Heart left ventricle (tissue), 16 donors: ENCODE measurements at regions of chr2 and their contacts with region 1.

Region 1: GRCh38 chr2:113889471-113890252 is at the start of gene ACTR3:
- DNase-seq: peak; percentile 98 to 99 (median 99)
- ATAC-seq: peak; percentile 97 to 99 (median 98)
- H3K4me3 ChIP-seq: peak within 1 kb of the TSS; percentile 73 to 99 (median 94)
- H3K27ac ChIP-seq: peak within 1 kb of the TSS; percentile 93 to 99 (median 98)
- H3K4me1 ChIP-seq: peaks cover 0 to 77% (median 53%) of the 10 kb centered on the region in 12 donors
- H3K27me3 ChIP-seq: no peaks in the 10 kb centered on the region
- CTCF ChIP-seq: peak in 1 of 12 donors; percentile 25
- POLR2A ChIP-seq: peak; percentile 69 to 93
- total RNA-seq, gene ACTR3: 53.3 to 238 (median 132) TPM

Region 2: DNA sequence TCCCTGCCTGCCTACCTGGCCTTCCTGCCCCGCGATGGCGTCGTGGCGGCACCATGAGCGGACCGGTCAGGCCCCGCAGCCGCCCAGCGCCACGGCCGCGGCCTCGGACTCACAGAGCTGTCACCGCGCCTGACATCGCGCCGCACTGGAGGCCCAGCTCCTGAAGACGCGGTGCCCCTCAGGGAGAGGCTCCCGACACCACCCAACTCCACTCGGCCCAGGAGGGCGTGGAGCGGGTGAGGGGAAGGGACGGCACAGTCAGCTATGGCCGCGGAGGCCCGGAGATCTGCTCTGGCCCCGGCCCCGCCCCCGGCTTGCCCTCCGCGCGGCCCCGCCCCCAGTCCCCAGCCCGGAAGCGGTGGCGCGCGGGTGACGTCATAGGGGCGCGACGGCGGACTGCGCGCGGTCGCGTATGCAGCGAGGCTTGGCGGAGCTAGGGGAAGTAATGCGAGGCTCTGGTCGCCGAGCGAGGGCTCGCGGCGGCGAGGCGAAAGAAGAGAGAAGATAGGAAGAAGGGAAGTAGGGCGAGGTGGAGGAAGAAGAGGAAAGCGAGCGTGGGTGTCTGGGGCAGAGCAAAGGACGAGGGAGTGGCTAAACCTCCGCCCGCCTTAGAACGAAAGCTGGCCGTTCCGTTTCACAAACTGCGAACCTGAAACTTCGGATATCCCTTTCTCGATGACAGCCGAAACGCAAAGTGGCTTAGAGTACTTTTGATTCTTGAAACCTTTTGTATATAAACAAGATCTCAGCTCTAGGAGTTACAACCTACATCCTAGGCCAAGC is 133.1 kb before region 1 on chr2 and contains the start of gene SLC35F5:
- intact Hi-C with region 1: loop called in 9 of 10 experiments (anchors 1 to 10 kb)
- DNase-seq: peak; percentile 93 to 97 (median 95)
- ATAC-seq: peak; percentile 97 to 99 (median 98)
- H3K4me3 ChIP-seq: peak within 1 kb of the TSS; percentile 68 to 97 (median 88)
- H3K27ac ChIP-seq: peak within 1 kb of the TSS; percentile 63 to 98 (median 95)
- H3K4me1 ChIP-seq: peaks cover 0 to 38% (median 19%) of the 10 kb centered on the region in 12 donors
- H3K27me3 ChIP-seq: no peaks in the 10 kb centered on the region
- CTCF ChIP-seq: no peak
- POLR2A ChIP-seq: peak in 1 of 2 donors; percentile 84
- total RNA-seq, gene SLC35F5: 38.2 to 97.2 (median 63.9) TPM

Region 3: DNA sequence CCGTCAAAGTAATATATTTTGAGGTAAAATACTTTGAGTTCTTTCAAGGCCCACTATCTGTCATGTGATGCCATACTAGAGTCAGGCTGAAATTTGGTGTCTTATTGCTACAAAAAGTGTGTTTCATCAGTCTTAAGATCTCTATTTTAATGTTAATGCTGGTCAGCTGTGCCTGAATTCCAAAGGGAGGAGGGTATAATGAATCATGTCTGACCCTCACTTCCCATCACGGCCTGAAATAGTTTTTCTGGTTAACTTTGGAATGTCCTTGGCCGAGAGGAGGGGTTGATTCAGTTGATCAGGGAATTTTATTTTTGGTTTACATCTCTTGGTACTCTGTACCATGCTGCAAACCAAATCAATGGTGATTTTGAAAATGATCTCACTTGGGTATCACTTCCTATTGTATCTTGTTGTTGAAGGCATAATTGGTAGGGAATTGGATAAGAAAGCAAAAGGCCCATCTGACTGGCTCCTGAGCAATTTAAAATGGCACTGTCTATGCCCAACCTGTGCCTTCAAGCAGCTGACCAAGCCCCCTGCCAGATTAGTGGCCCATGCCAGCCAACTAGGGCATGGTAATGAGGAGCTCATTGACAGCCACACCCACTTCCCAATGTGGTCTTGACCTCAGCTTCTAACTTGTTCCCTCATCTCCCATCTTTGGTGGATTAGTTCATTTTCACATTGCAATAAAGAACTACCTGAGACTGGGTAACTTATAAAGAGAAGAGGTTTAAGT is 127.1 kb before region 1 on chr2:
- intact Hi-C with region 1: loop called in 7 of 10 experiments (anchors 5 to 10 kb)
- DNase-seq: no peak
- ATAC-seq: no peak
- H3K4me3 ChIP-seq: no peak overlapping the region
- H3K27ac ChIP-seq: peak overlapping the region in 1 of 12 donors; percentile 24
- H3K4me1 ChIP-seq: peaks cover 0 to 16% (median 3%) of the 10 kb centered on the region in 12 donors
- H3K27me3 ChIP-seq: no peaks in the 10 kb centered on the region
- CTCF ChIP-seq: no peak
- POLR2A ChIP-seq: no peak

Region 4: DNA sequence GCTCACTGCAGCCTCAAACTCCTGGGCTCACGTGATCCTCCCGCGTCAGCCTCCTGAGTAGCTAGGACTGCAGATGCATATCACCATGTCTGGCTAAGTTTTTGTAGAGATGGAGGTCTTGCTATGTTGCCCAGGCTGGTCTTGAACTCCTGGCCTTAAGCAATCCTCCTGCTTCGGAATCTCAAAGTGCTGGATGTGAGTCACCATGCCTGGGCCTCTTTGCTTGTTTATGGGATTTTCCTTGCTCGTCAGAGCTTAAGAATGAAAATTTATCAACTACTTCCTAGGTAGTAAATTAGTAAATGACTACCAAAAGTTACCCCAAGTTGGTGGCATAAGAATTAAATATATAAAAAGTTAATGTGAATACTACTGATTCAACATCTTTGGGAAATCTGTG is 51.2 kb after region 1 on chr2:
- intact Hi-C with region 1: loop called in 2 of 10 experiments (anchors 5 to 10 kb)
- DNase-seq: no peak
- ATAC-seq: no peak
- H3K4me3 ChIP-seq: no peak overlapping the region
- H3K27ac ChIP-seq: no peak overlapping the region
- H3K4me1 ChIP-seq: no peaks in the 10 kb centered on the region
- H3K27me3 ChIP-seq: no peaks in the 10 kb centered on the region
- CTCF ChIP-seq: no peak
- POLR2A ChIP-seq: no peak

Region 5: GRCh38 chr2:113959202-113959601 is 69.5 kb after region 1 on chr2:
- intact Hi-C with region 1: loop called in 1 of 10 experiments (anchors 10 kb)
- DNase-seq: no peak
- ATAC-seq: no peak
- H3K4me3 ChIP-seq: no peak overlapping the region
- H3K27ac ChIP-seq: no peak overlapping the region
- H3K4me1 ChIP-seq: no peaks in the 10 kb centered on the region
- H3K27me3 ChIP-seq: no peaks in the 10 kb centered on the region
- CTCF ChIP-seq: no peak
- POLR2A ChIP-seq: no peak